Activated CD4-positive, alpha-beta T cell treated with anti-CD3 and anti-CD28 coated beads for 36 hours (primary cell): ENCODE measurements at regions of chr19 and their contacts with region 1.

Region 1: GRCh38 chr19:55632463-55632834 is 8.1 kb upstream of the ZNF784 start:
- DNase-seq: peak; percentile 93
- ATAC-seq: peak; percentile 43
- H3K4me3 Mint-ChIP-seq: peak overlapping the region; percentile 30
- H3K27ac Mint-ChIP-seq: peak overlapping the region; percentile 37
- H3K4me1 Mint-ChIP-seq: peaks cover 37% of the 10 kb centered on the region
- H3K27me3 Mint-ChIP-seq: no peaks in the 10 kb centered on the region

Region 2: DNA sequence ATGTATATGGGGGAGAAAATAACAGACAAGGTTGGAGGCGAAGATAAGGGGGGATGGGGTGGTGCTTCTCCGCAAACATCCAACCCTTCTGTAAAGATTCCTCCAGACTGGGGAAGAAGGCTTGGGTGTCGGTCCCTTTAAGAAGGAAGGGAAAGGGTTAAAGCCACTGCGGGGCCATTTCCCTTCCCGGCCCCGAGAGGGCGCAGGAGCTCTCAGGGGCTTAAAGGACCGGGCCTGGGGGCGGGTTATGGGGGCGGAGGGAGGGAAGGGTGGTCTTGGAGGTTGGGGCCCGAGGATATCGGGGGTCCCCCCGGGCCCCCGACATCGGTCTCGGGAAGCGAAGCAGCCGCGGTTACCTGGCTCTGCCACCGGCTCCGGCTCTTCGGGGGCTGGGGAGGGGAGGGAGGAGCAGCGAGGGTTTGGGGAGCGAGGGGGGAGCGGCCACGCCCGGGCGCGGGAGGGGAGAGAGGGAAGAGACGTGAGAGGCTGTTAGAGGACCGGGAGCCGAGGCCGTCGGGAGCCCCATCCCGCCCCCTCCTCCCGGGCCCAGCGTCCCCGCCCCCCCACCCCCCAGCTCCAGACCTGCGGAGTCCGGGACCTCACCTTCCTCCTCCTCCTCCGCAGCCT is 486.3 kb before region 1 on chr19:
- CTCF ChIA-PET with region 1: no interaction called
- POLR2A ChIA-PET with region 1: no interaction called
- intact Hi-C with region 1: loop called in 1 of 2 experiments (anchors 1 kb)
- DNase-seq: peak; percentile 59
- ATAC-seq: peak; percentile 23
- H3K4me3 Mint-ChIP-seq: no peak overlapping the region
- H3K27ac Mint-ChIP-seq: no peak overlapping the region
- H3K4me1 Mint-ChIP-seq: peaks cover 2% of the 10 kb centered on the region
- H3K27me3 Mint-ChIP-seq: peaks cover 23% of the 10 kb centered on the region

Region 3: DNA sequence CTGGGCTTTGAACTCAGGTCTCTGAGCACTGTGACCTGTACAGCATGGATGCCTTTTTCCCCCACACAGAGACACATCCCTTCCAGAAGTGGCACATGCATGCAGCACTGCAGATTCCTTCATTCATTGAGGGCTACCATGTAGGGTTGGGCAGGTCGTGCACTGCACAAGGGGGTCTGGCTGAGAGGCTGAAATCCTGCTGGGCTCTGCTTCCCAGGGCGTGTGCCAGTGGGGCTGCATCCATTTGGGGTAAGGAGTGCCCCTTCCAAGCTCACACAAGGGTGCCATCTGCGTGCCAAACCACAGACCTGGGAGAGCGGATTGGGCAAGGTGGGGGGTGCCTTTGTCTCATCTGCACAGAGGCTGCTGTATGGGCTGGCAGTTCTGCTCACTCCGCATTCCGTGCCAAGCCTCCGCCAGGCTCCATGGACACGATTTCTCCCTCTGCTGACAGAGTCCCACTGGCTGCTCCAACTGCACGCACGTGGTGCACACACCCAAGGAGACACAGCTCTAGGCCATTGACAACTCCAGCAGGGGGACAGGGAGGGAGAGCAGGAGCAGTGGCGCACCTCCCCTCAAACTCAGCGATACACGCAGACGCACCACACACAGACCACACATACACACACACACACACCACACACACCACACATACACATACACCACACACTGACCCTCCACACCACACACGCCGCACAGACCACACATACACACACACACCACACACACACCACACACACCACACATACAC is 184.9 kb before region 1 on chr19:
- CTCF ChIA-PET with region 1: no interaction called
- POLR2A ChIA-PET with region 1: no interaction called
- intact Hi-C with region 1: no loop called
- DNase-seq: no peak
- ATAC-seq: peak; percentile 42
- H3K4me3 Mint-ChIP-seq: no peak overlapping the region
- H3K27ac Mint-ChIP-seq: no peak overlapping the region
- H3K4me1 Mint-ChIP-seq: peaks cover 6% of the 10 kb centered on the region
- H3K27me3 Mint-ChIP-seq: peaks cover 46% of the 10 kb centered on the region

Region 4: DNA sequence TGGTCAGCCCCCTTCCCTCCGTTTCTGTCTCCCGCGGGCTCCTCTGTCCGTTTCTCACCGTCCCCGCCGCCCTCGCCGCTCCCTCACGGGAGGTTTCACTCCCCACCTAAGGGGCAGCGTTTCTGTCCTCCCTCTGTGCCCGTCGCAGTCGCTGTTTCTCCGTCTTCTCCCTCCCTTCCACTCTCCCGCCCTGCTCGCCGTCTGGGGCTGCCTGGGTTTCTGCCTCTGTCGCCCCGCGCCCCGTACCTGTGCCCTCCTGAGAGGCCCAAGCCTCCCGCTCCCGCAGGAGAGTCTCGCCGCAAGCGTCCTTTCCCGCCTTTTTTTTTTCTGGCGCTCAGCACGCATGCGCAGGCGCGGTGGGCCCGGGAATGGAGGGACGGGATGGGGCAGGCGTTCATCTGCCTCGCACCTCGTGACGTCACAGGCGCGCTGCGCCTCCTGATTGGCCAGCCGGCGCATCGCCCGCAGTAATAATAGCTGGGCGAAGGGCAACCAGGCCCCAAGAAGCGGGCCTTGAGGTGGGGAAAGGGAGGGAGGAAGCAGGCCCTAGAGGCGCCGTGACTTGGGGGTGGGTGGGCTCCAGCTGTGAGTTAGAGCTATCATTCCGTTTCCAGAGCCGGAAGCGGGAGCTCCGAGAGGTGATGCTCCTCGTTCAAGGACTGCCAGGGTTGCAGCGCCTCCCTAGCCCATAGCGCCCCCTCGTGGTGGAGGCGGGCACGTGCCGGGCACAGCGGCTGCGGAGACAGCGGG is 128.8 kb before region 1 on chr19:
- CTCF ChIA-PET with region 1: interaction called, 23 read pairs
- POLR2A ChIA-PET with region 1: no interaction called
- intact Hi-C with region 1: no loop called
- DNase-seq: peak; percentile 96
- ATAC-seq: peak; percentile 97
- H3K4me3 Mint-ChIP-seq: peak overlapping the region; percentile 65
- H3K27ac Mint-ChIP-seq: peak overlapping the region; percentile 67
- H3K4me1 Mint-ChIP-seq: peaks cover 19% of the 10 kb centered on the region
- H3K27me3 Mint-ChIP-seq: no peaks in the 10 kb centered on the region

Region 5: DNA sequence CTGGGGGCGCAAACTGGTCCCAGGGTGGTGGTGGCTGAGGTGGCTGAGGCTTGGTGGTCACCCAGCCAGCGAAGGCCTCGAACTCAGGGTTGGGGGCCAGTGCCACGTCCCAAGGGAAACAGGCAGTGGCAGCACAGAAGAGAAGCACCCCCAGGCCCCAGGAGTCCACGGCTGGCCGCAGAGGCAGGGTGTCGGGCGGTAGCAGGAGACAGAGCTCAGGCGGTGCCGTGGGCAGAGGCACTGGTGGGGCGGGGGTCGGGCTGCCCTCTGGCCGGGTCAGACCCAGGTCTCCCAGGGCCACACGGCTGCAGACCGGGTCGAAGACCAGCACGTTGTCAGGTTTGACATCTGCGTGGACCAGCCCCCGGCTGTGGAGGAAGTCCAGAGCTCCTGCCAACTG is 91.4 kb before region 1 on chr19:
- CTCF ChIA-PET with region 1: no interaction called
- POLR2A ChIA-PET with region 1: no interaction called
- intact Hi-C with region 1: no loop called
- DNase-seq: no peak
- ATAC-seq: no peak
- H3K4me3 Mint-ChIP-seq: no peak overlapping the region
- H3K27ac Mint-ChIP-seq: no peak overlapping the region
- H3K4me1 Mint-ChIP-seq: no peaks in the 10 kb centered on the region
- H3K27me3 Mint-ChIP-seq: peaks cover 10% of the 10 kb centered on the region

Region 6: GRCh38 chr19:55580628-55581144 is 51.8 kb before region 1 on chr19 and contains the start of gene ZNF579:
- CTCF ChIA-PET with region 1: interaction called, 4 read pairs
- POLR2A ChIA-PET with region 1: no interaction called
- intact Hi-C with region 1: loop called in 1 of 2 experiments (anchors 2 kb)
- DNase-seq: peak; percentile 89
- ATAC-seq: peak; percentile 79
- H3K4me3 Mint-ChIP-seq: peak within 1 kb of the TSS; percentile 83
- H3K27ac Mint-ChIP-seq: peak within 1 kb of the TSS; percentile 78
- H3K4me1 Mint-ChIP-seq: peaks cover 23% of the 10 kb centered on the region
- H3K27me3 Mint-ChIP-seq: no peaks in the 10 kb centered on the region
- total RNA-seq, gene ZNF579: 7.2 to 7.5 TPM

Region 7: GRCh38 chr19:55643348-55644176 is 11.1 kb after region 1 on chr19 and contains the start of gene ZNF581:
- CTCF ChIA-PET with region 1: interaction called, 16 read pairs
- POLR2A ChIA-PET with region 1: interaction called, 3 read pairs
- intact Hi-C with region 1: loop called (anchors 1 kb)
- DNase-seq: peak; percentile 91
- ATAC-seq: peak; percentile 55
- H3K4me3 Mint-ChIP-seq: peak within 1 kb of the TSS; percentile 93
- H3K27ac Mint-ChIP-seq: peak within 1 kb of the TSS; percentile 99
- H3K4me1 Mint-ChIP-seq: peaks cover 44% of the 10 kb centered on the region
- H3K27me3 Mint-ChIP-seq: no peaks in the 10 kb centered on the region
- total RNA-seq, gene ZNF581: 18.9 to 26.9 TPM

Region 8: GRCh38 chr19:55809381-55810058 is 177.1 kb after region 1 on chr19:
- CTCF ChIA-PET with region 1: interaction called, 10 read pairs
- POLR2A ChIA-PET with region 1: no interaction called
- intact Hi-C with region 1: no loop called
- DNase-seq: peak; percentile 71
- ATAC-seq: peak; percentile 97
- H3K4me3 Mint-ChIP-seq: no peak overlapping the region
- H3K27ac Mint-ChIP-seq: no peak overlapping the region
- H3K4me1 Mint-ChIP-seq: peaks cover 4% of the 10 kb centered on the region
- H3K27me3 Mint-ChIP-seq: peaks cover 15% of the 10 kb centered on the region